Activated CD8-positive, alpha-beta memory T cell treated with anti-CD3 and anti-CD28 coated beads, Interleukin-2, amount 10 ng/mL, durations not matched to agents 7 days and 5 days (primary cell): ENCODE measurements at regions of chr2 and their contacts with region 1.

Region 1: DNA sequence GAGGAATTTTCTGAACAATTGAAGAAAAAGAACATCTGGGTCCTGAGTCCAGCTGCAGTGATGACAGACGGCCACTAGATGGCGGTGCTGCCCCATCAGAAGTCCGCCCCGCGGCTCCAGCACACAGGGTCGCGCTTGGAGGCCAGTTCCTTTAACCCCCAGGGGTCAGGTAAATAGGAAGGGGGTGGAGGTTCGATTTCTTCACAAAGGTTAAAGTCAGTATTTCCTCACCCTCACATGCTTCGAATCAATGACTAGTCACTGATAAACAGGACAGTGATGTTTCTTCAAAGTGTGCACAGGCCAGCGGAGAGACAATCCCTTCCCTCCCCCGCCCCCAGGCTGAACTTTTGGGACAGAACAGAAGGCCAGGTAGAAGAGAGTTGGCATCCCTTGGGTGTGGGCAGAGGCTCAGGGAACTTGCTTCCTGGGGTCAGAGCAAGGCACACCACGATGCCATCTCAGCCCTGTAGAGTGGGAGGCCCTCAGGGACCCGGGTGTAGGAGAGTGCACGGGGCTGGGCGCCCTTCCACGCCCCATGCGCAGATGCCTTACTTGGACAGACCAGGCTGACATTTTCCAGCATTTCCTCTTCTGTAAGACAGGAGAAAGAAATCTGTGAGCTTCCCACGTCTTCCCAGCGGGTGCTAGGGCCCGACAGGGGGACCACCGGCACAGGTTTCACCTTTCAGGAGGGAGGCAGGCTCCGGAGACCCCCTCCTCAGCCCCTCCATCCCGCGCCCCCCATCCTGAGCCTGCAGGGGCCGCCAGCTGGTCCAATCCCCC is 722 bp downstream of the APOB start:
- DNase-seq: peak; percentile 58
- ATAC-seq: peak; percentile 66
- H3K4me3 Mint-ChIP-seq: no peak overlapping the region
- H3K27ac Mint-ChIP-seq: no peak overlapping the region
- H3K4me1 Mint-ChIP-seq: peaks cover 3% of the 10 kb centered on the region
- H3K27me3 Mint-ChIP-seq: peaks cover 28% of the 10 kb centered on the region

Region 2: GRCh38 chr2:21118302-21118920 is 75.3 kb after region 1 on chr2:
- CTCF ChIA-PET with region 1: interaction called, 10 read pairs
- DNase-seq: no peak
- ATAC-seq: no peak
- H3K4me3 Mint-ChIP-seq: no peak overlapping the region
- H3K27ac Mint-ChIP-seq: no peak overlapping the region
- H3K4me1 Mint-ChIP-seq: no peaks in the 10 kb centered on the region
- H3K27me3 Mint-ChIP-seq: peaks cover 6% of the 10 kb centered on the region

Region 3: DNA sequence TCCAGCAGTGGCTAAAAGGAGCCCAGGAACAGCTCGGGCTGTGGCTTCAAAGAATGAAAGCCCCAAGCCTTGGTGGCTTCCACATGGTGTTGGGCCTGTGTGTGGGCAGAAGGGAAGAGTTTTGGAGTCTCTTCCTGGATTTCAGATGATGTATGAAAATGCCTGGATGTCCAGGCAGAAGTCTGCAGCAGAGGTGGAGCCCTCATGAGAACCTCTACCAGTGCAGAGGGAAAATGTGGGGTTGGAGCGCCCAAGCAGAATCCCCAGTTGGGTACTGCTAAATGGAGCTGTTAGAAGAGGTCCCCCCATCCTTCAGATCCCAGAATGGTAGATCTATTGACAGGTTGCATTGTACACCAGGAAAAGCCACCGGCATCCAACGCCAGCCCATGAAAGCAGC is 492.7 kb after region 1 on chr2:
- CTCF ChIA-PET with region 1: no interaction called
- DNase-seq: no peak
- ATAC-seq: no peak
- H3K4me3 Mint-ChIP-seq: no peak overlapping the region
- H3K27ac Mint-ChIP-seq: no peak overlapping the region
- H3K4me1 Mint-ChIP-seq: no peaks in the 10 kb centered on the region
- H3K27me3 Mint-ChIP-seq: no peaks in the 10 kb centered on the region

Region 4: GRCh38 chr2:21924640-21925285 is 881.6 kb after region 1 on chr2:
- CTCF ChIA-PET with region 1: no interaction called
- DNase-seq: no peak
- ATAC-seq: no peak
- H3K4me3 Mint-ChIP-seq: no peak overlapping the region
- H3K27ac Mint-ChIP-seq: no peak overlapping the region
- H3K4me1 Mint-ChIP-seq: peaks cover 3% of the 10 kb centered on the region
- H3K27me3 Mint-ChIP-seq: no peaks in the 10 kb centered on the region